ENCODE measurements at regions of chr1 and their contacts with region 1.

Region 1: GRCh38 chr1:68049941-68050878 is at the start of gene DIRAS3:
- DNase-seq: peak; percentile 48
- H3K4me3 Mint-ChIP-seq: peak within 1 kb of the TSS; percentile 91
- H3K27ac Mint-ChIP-seq: peak within 1 kb of the TSS; percentile 71
- H3K4me1 Mint-ChIP-seq: peaks cover 30% of the 10 kb centered on the region
- H3K27me3 Mint-ChIP-seq: no peaks in the 10 kb centered on the region
- CTCF ChIP-seq: no peak
- total RNA-seq, gene DIRAS3: 5.2 and 8.1 TPM in 2 replicates

Region 2: DNA sequence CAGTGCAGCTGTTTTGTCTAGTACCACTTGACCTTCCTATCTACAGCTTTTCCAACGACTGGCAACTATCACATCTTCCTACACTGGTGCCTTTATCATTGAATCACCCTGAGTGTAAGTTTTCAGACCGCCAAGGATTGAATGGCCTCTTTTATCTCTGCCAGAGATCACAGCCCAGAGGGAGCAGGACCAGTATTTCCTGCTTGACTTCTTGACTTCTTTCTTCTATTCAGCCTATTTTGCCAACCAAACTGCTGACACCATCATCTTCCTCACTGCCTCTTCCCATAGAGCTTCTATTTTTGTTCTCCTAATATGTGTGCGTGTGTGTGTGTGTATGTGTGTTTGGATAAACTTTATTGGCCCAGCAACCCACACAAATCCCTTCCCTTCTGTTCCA is 673.8 kb before region 1 on chr1:
- CTCF ChIA-PET with region 1: no interaction called
- intact Hi-C with region 1: no loop called
- DNase-seq: peak; percentile 34
- H3K4me3 Mint-ChIP-seq: no peak overlapping the region
- H3K27ac Mint-ChIP-seq: no peak overlapping the region
- H3K4me1 Mint-ChIP-seq: peaks cover 14% of the 10 kb centered on the region
- H3K27me3 Mint-ChIP-seq: no peaks in the 10 kb centered on the region
- CTCF ChIP-seq: no peak

Region 3: GRCh38 chr1:68036946-68037345 is 13.3 kb before region 1 on chr1:
- CTCF ChIA-PET with region 1: no interaction called
- intact Hi-C with region 1: no loop called
- DNase-seq: no peak
- H3K4me3 Mint-ChIP-seq: no peak overlapping the region
- H3K27ac Mint-ChIP-seq: no peak overlapping the region
- H3K4me1 Mint-ChIP-seq: no peaks in the 10 kb centered on the region
- H3K27me3 Mint-ChIP-seq: peaks cover 12% of the 10 kb centered on the region
- CTCF ChIP-seq: no peak

Region 4: DNA sequence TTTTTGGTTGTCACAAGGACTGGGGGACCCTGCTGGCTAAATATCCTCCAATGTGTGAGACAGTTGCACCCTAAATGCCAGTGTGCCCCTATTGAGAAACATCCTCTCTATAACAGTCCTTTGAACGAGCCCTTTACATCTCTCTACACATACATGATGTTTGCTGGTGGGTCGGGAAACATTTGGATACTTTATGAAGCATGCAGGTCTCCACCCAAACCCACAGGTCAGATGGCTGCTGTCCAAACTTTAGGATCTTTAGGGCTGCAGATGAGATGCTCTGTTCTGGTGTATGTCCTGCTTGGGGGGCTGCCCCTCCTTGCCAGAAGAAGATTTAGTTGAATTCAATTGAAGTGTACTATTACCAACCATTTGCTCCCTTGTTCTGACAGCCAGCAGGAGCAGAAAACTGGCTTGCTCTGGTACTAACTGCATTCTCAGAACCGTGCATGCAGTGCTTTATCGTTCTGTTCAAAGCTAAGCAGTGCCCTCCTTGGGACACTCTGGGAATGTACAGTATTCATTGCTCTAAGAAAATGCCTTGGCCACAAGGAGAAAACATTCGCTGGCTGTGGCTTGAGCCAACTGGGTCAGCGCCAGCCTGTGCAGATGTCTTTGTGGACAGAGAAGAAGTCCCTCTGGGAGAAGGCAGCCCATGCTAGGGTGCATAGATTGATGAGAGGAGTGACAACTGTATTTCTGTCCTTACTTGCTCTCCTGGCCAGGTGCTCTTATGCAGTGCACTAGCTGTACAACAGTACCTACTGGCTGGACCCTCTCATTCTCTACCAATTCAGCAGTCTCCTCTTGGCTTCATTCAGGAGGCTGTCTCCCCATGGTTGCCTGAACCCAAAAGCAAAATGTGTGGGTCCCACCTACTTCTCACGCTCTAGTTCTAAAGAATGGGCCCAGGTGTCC is 61.6 kb after region 1 on chr1:
- CTCF ChIA-PET with region 1: no interaction called
- intact Hi-C with region 1: loop called (anchors 5 kb)
- DNase-seq: peak; percentile 59
- H3K4me3 Mint-ChIP-seq: no peak overlapping the region
- H3K27ac Mint-ChIP-seq: no peak overlapping the region
- H3K4me1 Mint-ChIP-seq: peaks cover 23% of the 10 kb centered on the region
- H3K27me3 Mint-ChIP-seq: no peaks in the 10 kb centered on the region
- CTCF ChIP-seq: peak; percentile 24

Measured in Calu3 (cell line).